Right cardiac atrium (tissue), 5 donors: ENCODE measurements at regions of chr1 and their contacts with region 1.

Region 1: GRCh38 chr1:34786521-34787325 is 5.7 kb downstream of the GJB3 start:
- DNase-seq: peak; percentile 72 to 87 (median 80)
- ATAC-seq: peak; percentile 78 to 80
- H3K4me3 ChIP-seq: no peak overlapping the region
- H3K27ac ChIP-seq: no peak overlapping the region
- H3K4me1 ChIP-seq: peaks cover 2% of the 10 kb centered on the region
- H3K27me3 ChIP-seq: no peaks in the 10 kb centered on the region

Region 2: DNA sequence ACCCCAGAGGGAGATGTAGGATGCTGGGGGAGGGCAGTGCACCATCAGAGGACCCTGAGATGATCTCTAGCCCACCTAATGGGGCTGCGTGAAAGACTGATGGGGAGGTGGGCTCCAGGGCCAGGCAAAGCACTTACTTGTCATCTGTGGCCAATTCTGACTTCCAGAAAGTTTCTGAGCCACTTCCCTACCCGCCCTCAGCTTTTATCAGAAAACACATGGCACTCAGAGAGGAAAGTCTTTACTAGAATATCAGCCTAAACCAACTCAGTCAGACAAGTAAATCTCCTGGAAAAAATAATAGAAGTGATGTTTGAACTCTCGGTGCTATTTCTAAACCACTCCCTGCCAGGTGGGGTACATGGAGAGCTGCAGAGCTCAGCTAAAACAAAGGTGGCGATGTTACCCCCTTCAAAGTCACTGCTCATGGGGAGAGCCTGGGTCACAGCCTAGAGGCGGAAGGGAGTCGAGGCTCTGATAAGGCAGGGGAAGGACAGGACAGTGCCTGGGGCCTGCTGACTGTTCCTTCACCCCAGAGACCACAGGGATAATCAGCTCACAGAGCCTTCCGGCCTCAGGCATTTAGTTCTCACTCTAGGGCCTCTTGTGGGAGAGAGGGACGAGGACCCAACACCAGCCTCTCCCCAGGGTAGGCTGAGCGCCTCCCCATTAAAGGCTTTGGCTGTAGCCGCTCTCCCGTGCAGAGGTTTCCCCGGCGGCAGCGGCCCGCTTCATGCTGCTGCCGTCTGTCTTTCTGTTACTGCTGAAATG is 58.6 kb after region 1 on chr1:
- intact Hi-C with region 1: loop called in 3 of 4 experiments (anchors 5 kb)
- DNase-seq: peak in 2 of 3 donors; percentile 53 to 58
- ATAC-seq: peak; percentile 44 to 79
- H3K4me3 ChIP-seq: no peak overlapping the region
- H3K27ac ChIP-seq: peak overlapping the region; percentile 60
- H3K4me1 ChIP-seq: peaks cover 19% of the 10 kb centered on the region
- H3K27me3 ChIP-seq: no peaks in the 10 kb centered on the region

Region 3: DNA sequence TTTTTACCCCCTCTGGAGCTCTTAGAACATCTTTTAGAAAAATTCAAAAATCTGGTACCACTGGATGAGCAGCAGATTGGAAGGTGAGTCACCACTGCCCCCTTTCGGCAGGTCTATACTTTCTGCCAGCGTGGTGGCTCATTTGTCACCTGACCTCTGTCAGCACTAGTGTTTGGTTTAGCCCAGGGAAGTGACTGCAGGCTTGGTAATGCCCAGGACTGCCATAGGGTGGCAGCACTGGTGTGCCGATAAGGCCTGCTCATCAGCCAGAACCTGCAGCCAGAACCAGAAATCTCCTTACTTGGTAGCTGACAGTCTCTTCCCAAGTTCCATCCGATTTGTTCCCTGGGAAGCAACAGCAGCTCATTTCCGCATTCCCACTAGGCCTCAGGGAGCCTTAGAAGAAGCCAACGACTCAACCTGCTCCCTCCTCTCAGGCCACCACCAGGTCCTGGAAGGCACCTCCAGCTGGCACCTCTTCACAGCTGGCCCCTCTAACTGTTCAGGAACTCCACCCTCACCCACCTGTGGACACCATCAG is 66.0 kb after region 1 on chr1:
- intact Hi-C with region 1: loop called (anchors 2 to 5 kb)
- DNase-seq: peak; percentile 86 to 93 (median 92)
- ATAC-seq: peak; percentile 92 to 94
- H3K4me3 ChIP-seq: no peak overlapping the region
- H3K27ac ChIP-seq: peak overlapping the region; percentile 32
- H3K4me1 ChIP-seq: peaks cover 4% of the 10 kb centered on the region
- H3K27me3 ChIP-seq: no peaks in the 10 kb centered on the region

Region 4: DNA sequence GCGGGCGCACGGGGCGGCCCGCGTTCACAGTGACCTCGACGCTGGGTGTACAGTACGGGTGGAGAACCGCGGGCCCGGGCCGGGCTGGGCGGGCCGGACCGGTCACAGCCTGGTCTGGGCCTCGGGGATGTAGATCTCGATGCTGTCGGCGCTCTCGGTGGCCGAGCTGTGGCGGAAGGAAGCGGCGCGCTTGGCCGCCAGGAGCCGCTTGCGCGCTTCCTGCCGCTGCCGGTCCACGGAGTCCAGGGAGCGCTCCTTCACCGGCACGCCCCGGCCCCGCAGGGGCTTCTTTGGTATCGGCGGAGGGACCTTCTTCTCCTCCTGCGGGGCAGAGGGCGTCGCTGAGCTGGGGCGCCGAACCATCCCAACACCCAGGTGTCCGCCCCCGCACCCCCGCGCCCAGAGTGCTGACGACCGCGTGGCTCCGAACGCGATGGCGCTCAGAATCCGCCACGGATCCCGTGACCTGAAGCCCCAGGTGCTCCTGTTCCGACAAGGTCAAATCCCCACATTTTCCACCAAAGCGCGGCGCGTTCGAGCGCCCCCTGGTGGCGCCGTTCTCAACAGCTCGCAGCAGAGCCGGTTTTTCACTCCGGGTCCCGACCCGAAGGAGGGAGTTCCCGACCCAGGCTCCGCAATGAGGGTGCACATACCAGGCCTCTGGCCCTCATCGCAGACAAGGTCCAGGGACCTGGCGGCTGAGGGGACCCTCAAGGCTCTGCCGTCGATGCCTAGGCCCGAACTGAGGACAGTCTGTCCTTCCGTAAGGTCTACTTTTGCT is 79.4 kb after region 1 on chr1:
- intact Hi-C with region 1: loop called in 3 of 4 experiments (anchors 5 kb)
- DNase-seq: peak; percentile 87 to 96 (median 95)
- ATAC-seq: peak; percentile 72 to 81
- H3K4me3 ChIP-seq: peak overlapping the region; percentile 56
- H3K27ac ChIP-seq: peak overlapping the region; percentile 17
- H3K4me1 ChIP-seq: no peaks in the 10 kb centered on the region
- H3K27me3 ChIP-seq: no peaks in the 10 kb centered on the region